ENCODE measurements at regions of chr4 and their contacts with region 1.

Region 1: GRCh38 chr4:101813604-101814003 is 23.1 kb downstream of the BANK1 start:
- DNase-seq: peak; percentile 39
- ATAC-seq: peak; percentile 97
- H3K4me3 Mint-ChIP-seq: peak overlapping the region; percentile 81
- H3K27ac Mint-ChIP-seq: peak overlapping the region; percentile 92
- H3K4me1 Mint-ChIP-seq: peaks cover 83% of the 10 kb centered on the region
- H3K27me3 Mint-ChIP-seq: no peaks in the 10 kb centered on the region
- CTCF ChIP-seq: no peak

Region 2: DNA sequence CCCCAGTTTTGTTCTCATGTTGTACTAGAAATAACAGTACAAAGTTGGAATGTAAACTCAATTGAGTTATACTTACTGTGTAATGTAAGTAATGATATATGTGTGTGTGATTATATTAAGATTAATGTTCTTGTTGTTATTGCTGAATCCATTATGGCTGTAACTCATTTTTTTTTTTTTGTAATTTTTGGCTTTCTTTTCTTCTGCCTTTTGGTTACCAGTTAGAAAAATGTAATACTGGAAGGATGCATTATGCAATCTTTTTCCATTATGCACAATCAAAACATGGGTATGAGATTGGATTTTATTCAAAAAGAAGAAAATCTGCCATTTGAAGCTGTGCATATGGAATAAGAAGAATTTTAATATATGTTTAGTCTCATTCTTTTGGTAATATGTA is 10.9 kb after region 1 on chr4:
- CTCF ChIA-PET with region 1: no interaction called
- POLR2A ChIA-PET with region 1: interaction called, 6 read pairs
- intact Hi-C with region 1: loop called (anchors 1 kb)
- DNase-seq: no peak
- ATAC-seq: no peak
- H3K4me3 Mint-ChIP-seq: peak overlapping the region; percentile 21
- H3K27ac Mint-ChIP-seq: peak overlapping the region; percentile 72
- H3K4me1 Mint-ChIP-seq: peaks cover 78% of the 10 kb centered on the region
- H3K27me3 Mint-ChIP-seq: no peaks in the 10 kb centered on the region
- CTCF ChIP-seq: no peak

Region 3: DNA sequence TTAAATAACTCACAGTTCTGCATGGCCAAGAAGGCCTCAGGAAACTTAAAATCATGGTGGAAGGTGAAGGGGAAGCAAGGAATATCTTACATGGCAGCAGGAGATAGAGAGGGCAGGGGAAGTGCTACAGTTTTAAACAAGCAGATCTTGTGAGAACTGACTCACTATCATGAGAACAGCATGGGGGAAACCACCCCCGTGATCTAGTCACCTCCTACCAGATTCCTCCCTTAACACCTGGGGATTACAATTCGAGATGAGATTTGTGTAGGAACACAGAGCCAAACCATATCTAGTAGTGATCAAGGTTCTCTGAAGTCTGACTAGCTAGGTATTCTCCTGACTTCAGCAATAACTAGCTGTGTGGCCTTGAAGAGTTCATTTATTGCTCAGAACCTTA is 32.9 kb after region 1 on chr4:
- CTCF ChIA-PET with region 1: no interaction called
- POLR2A ChIA-PET with region 1: interaction called, 5 read pairs
- intact Hi-C with region 1: loop called (anchors 2 kb)
- DNase-seq: no peak
- ATAC-seq: peak; percentile 25
- H3K4me3 Mint-ChIP-seq: peak overlapping the region; percentile 12
- H3K27ac Mint-ChIP-seq: peak overlapping the region; percentile 83
- H3K4me1 Mint-ChIP-seq: peaks cover 90% of the 10 kb centered on the region
- H3K27me3 Mint-ChIP-seq: no peaks in the 10 kb centered on the region
- CTCF ChIP-seq: no peak

Region 4: DNA sequence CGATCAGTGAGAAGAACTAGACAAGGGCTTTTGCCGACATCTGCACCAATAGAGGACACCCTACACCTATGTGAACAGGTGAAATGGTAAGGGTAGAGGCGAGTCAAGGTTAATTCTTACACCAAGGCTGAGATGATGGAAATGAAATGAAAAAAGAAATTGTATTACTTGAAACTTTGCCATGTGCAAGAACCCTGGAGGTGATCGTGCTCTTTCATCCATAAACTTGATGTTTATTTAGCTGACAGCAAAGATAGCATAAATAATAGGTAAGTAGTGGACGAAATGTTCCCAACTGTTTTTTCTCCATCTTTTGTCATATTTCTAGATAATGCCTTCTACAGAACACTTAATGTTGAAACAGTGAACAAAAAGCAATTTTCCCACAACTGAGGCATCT is 139.4 kb after region 1 on chr4:
- CTCF ChIA-PET with region 1: no interaction called
- POLR2A ChIA-PET with region 1: no interaction called
- intact Hi-C with region 1: no loop called
- DNase-seq: no peak
- ATAC-seq: no peak
- H3K4me3 Mint-ChIP-seq: no peak overlapping the region
- H3K27ac Mint-ChIP-seq: peak overlapping the region; percentile 37
- H3K4me1 Mint-ChIP-seq: peaks cover 48% of the 10 kb centered on the region
- H3K27me3 Mint-ChIP-seq: no peaks in the 10 kb centered on the region
- CTCF ChIP-seq: no peak

Region 5: DNA sequence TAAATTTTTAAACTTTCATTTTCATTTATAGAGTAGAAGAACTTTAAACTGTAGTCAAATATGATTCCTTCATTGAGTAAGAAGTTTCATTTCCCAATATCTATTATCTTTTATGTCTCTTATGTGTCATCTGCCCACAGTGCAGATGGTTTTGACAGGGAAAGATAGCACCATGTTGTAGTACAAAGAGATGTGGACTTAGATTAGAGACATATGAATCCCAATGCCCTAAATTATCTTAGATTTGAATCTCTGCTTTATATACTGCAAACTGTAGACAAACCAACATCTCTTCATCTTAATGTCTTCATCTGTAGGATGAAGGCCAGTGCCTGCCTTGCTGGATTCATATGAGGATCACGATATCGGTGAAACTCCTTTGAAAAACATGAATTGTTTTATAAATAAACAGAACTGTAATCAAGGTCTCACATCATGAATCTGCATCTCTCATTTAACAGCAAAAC is 194.4 kb after region 1 on chr4:
- CTCF ChIA-PET with region 1: no interaction called
- POLR2A ChIA-PET with region 1: no interaction called
- intact Hi-C with region 1: loop called (anchors 5 kb)
- DNase-seq: no peak
- ATAC-seq: peak; percentile 92
- H3K4me3 Mint-ChIP-seq: peak overlapping the region; percentile 38
- H3K27ac Mint-ChIP-seq: peak overlapping the region; percentile 57
- H3K4me1 Mint-ChIP-seq: peaks cover 59% of the 10 kb centered on the region
- H3K27me3 Mint-ChIP-seq: no peaks in the 10 kb centered on the region
- CTCF ChIP-seq: no peak